ENCODE measurements at regions of chr3 and their contacts with region 1.

Region 1: DNA sequence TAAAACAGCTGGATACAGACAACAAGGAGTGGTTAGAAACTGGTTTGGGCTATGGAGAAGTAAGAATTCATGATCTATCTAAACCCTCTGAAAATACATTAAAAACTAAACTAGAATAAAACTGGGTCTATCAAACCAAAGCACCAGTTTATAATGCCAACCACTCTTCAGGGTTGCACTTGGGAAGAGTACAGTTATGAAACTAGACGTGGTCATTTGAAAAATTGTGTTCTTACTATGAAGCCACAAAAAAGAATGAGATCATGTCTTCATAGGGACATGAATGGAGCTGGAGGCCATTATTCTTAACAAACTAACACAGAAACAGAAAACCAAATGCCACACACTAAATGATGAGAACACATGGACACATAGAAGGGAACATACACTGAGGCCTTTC is 103.8 kb downstream of the GAP43 start:
- DNase-seq: no peak
- ATAC-seq: no peak

Region 2: GRCh38 chr3:115658337-115659181 is 68.6 kb before region 1 on chr3:
- intact Hi-C with region 1: no loop called
- DNase-seq: peak; percentile 88
- ATAC-seq: peak; percentile 96

Region 3: GRCh38 chr3:115676336-115676735 is 50.8 kb before region 1 on chr3:
- intact Hi-C with region 1: loop called (anchors 2 kb)
- DNase-seq: no peak
- ATAC-seq: no peak

Region 4: DNA sequence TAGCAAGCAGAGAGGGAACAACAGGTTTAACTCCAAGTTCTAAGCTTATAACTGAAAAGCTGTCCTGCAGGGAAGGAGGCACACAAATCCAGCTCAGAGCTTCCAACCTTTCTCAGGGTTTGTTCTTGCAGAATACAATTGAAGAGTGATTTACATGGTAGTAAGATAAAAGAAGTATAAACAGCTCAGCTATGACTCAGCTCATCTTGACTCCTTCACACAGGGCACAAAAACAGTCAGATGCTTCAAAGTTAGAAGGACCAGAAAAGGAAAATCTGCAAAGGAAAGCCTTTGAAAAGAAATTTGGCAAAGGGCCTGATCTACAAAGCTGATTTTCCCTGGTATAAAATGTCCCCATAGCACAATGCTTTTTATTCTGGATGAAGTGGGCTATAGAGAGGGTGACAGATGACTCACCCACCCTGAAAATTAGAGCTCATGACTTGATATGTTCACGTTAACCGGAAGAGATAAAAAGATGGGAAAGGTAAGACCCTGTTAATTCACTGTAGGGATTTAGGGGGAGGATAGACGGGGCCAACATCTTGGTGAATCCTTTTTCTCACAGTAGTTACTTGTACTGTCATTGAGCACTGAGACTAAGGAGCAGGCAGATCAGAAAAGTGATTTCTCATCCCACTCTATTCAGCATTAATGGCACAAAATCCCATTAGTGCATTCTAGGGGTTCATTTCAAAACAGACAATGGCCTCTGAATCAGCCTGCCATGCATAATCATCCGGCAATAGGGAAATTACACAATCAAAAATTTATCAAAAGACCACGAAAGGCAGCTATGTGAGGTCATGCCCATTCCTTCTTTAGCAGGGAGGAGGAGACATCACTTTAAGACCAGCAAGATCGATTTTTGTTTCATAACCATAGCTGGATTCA is 39.7 kb after region 1 on chr3:
- intact Hi-C with region 1: no loop called
- DNase-seq: no peak
- ATAC-seq: no peak